Endothelial cell of umbilical vein (primary cell): ENCODE measurements at regions of chr6 and their contacts with region 1.

Region 1: DNA sequence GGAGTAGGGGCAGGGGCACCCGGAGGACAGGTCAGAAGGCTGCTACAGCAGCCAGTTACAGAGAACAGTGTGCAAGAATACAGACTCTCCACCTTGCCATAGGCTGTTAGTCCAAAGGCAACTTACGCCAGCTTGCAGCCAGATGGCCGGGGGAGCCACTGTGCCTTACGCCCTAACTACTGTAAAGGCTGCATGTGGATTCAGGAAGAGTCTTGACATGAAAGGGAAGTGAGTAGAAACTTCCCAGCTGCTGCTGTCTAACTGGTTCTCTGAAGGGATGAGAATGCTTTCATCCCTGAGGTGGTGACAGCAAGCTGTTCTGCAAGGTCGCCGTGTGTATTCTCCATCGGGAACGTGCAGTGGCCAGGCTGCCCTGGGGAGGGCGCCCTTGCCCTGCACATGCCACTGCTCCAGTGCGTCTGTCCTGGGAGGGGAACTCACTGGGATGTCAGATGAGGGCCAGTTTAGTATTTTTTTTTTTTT is 46.1 kb downstream of the LYRM4 start:
- DNase-seq: peak; percentile 46
- H3K4me3 ChIP-seq: no peak overlapping the region
- H3K27ac ChIP-seq: no peak overlapping the region
- H3K4me1 ChIP-seq: peaks cover 5% of the 10 kb centered on the region
- H3K27me3 ChIP-seq: no peaks in the 10 kb centered on the region
- CTCF ChIP-seq: peak; percentile 75 to 76
- POLR2A ChIP-seq: no peak

Region 2: DNA sequence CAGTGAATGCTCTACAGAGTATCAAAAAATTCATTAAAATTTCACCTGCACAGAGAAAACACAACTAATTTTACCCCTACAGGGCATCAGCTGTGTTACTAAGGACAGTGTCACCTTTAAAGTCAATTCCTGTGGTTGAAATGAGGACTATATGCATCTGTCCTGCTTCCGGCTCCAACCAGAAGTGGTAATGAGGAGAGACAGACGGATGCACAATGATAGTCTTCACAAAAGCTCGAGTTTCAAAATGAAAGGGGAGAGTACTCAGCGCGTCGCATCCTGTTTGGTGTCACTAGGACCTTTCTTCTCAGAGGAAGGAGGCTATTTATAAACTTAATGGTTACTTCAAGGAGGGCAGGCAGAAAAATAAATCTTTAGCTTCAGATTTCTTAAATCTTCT is 40.4 kb before region 1 on chr6:
- CTCF ChIA-PET with region 1: no interaction called
- POLR2A ChIA-PET with region 1: no interaction called
- dilution Hi-C with region 1: no loop called
- intact Hi-C with region 1: no loop called
- DNase-seq: no peak
- H3K4me3 ChIP-seq: no peak overlapping the region
- H3K27ac ChIP-seq: no peak overlapping the region
- H3K4me1 ChIP-seq: no peaks in the 10 kb centered on the region
- H3K27me3 ChIP-seq: no peaks in the 10 kb centered on the region
- CTCF ChIP-seq: no peak
- POLR2A ChIP-seq: no peak

Region 3: GRCh38 chr6:5302995-5303622 is 88.5 kb after region 1 on chr6:
- CTCF ChIA-PET with region 1: interaction called, 4 read pairs
- POLR2A ChIA-PET with region 1: no interaction called
- dilution Hi-C with region 1: no loop called
- intact Hi-C with region 1: loop called (anchors 2 kb)
- DNase-seq: peak; percentile 18
- H3K4me3 ChIP-seq: no peak overlapping the region
- H3K27ac ChIP-seq: no peak overlapping the region
- H3K4me1 ChIP-seq: no peaks in the 10 kb centered on the region
- H3K27me3 ChIP-seq: no peaks in the 10 kb centered on the region
- CTCF ChIP-seq: peak; percentile 18 to 56
- POLR2A ChIP-seq: no peak

Region 4: GRCh38 chr6:5379647-5380242 is 165.1 kb after region 1 on chr6:
- CTCF ChIA-PET with region 1: interaction called, 22 read pairs
- POLR2A ChIA-PET with region 1: no interaction called
- dilution Hi-C with region 1: no loop called
- intact Hi-C with region 1: loop called (anchors 1 kb)
- DNase-seq: peak; percentile 71
- H3K4me3 ChIP-seq: no peak overlapping the region
- H3K27ac ChIP-seq: no peak overlapping the region
- H3K4me1 ChIP-seq: no peaks in the 10 kb centered on the region
- H3K27me3 ChIP-seq: no peaks in the 10 kb centered on the region
- CTCF ChIP-seq: peak; percentile 68 to 77
- POLR2A ChIP-seq: no peak

Region 5: DNA sequence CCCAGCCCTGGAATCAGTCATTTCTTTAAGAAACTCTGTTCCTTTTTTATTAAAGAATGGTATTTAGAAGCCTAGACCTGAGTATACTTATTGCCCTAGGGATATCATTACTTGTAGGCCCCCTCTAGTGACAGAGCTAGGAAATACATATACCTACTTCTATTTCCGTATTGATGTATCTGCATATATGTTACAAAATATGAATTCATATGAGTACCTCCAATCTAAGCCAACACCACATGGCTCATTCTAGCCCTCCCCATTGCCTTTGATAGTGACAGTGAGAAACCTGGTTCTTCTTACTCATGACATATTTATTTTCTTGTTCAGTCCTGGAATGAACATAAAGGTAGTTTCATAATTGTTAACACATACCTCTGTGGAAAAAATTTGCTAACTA is 183.9 kb after region 1 on chr6:
- CTCF ChIA-PET with region 1: interaction called, 8 read pairs
- POLR2A ChIA-PET with region 1: no interaction called
- dilution Hi-C with region 1: no loop called
- intact Hi-C with region 1: loop called (anchors 1 kb)
- DNase-seq: peak; percentile 62
- H3K4me3 ChIP-seq: no peak overlapping the region
- H3K27ac ChIP-seq: no peak overlapping the region
- H3K4me1 ChIP-seq: peaks cover 2% of the 10 kb centered on the region
- H3K27me3 ChIP-seq: no peaks in the 10 kb centered on the region
- CTCF ChIP-seq: peak; percentile 26 to 27
- POLR2A ChIP-seq: no peak

Region 6: DNA sequence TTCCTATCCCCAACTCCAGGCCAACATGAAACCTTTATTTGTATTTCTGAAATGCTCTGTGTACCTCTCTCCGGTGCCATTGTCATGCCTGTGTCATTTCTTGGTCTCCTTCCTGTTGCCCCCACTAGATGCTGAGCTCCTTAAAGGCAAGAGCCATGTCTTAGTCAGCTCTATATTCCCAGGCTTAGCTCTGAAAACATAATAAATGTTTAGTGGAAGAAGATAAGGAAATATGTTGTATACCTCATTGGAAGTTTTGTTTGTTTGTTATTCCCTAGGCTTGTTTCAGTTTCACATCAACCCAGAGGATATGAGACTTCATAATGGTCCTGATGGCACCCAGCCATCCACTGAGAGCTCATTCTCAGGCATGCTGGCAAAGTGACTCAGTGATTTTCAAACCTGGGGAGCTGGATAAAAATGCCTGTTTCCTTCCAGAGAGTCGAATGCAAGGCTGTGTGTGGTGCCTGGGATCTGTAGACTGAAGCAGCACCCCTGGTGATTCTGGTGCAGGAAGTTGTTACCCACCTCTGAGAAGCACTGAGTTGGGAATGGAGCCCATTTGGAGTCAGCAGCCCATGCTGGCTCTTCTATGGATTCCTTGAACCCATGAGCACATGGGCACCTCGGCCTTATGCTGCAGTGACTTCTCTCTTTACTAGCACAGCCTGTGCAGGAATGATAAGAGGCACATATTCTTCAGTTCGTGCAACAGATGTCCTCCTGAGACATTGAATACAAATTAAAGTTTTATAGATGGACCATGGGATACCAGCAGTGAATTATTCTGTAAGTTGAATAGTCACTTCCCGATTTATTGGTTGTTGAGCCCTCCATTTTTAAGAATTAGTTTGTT is 251.9 kb after region 1 on chr6:
- CTCF ChIA-PET with region 1: no interaction called
- POLR2A ChIA-PET with region 1: no interaction called
- dilution Hi-C with region 1: no loop called
- intact Hi-C with region 1: no loop called
- DNase-seq: peak; percentile 53
- H3K4me3 ChIP-seq: no peak overlapping the region
- H3K27ac ChIP-seq: no peak overlapping the region
- H3K4me1 ChIP-seq: peaks cover 6% of the 10 kb centered on the region
- H3K27me3 ChIP-seq: no peaks in the 10 kb centered on the region
- CTCF ChIP-seq: no peak
- POLR2A ChIP-seq: no peak